ENCODE measurements at regions of chr4 and their contacts with region 1.

Region 1: DNA sequence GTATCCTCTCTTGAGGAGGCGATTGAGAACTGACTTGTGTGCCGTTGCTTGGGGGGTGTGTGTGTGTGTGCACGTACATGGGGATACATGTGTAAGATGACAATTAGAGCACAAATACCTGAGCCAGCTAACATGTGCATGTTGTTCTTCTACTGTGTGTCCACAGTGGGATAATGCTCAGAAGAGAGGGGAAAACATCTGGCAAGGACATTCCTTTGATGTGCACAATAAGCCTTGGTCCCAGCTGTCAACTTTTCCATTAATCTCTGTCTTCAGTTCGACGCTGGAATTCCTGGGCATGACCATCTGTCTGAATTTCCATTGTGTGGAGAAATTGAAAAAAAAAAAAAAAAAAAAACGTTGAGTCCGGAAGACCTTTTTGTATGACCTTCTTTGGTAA is 592.0 kb upstream of the GALNTL6 start:
- DNase-seq: no peak
- ATAC-seq: no peak
- H3K4me3 ChIP-seq: no peak overlapping the region
- H3K4me3 Mint-ChIP-seq: no peak overlapping the region
- H3K27ac ChIP-seq: no peak overlapping the region
- H3K27ac Mint-ChIP-seq: no peak overlapping the region
- H3K4me1 ChIP-seq: no peaks in the 10 kb centered on the region
- H3K4me1 Mint-ChIP-seq: no peaks in the 10 kb centered on the region
- H3K27me3 ChIP-seq: no peaks in the 10 kb centered on the region
- H3K27me3 Mint-ChIP-seq: no peaks in the 10 kb centered on the region

Region 2: GRCh38 chr4:171239196-171239595 is 18.0 kb after region 1 on chr4:
- CTCF ChIA-PET with region 1: interaction called in 1 of 2 experiments, 4 read pairs
- POLR2A ChIA-PET with region 1: interaction called in 1 of 2 experiments, 12 read pairs
- DNase-seq: no peak
- ATAC-seq: no peak
- H3K4me3 ChIP-seq: no peak overlapping the region
- H3K4me3 Mint-ChIP-seq: no peak overlapping the region
- H3K27ac ChIP-seq: no peak overlapping the region
- H3K27ac Mint-ChIP-seq: no peak overlapping the region
- H3K4me1 ChIP-seq: no peaks in the 10 kb centered on the region
- H3K4me1 Mint-ChIP-seq: no peaks in the 10 kb centered on the region
- H3K27me3 ChIP-seq: no peaks in the 10 kb centered on the region
- H3K27me3 Mint-ChIP-seq: no peaks in the 10 kb centered on the region